ENCODE measurements at regions of chr10 and their contacts with region 1.

Region 1: DNA sequence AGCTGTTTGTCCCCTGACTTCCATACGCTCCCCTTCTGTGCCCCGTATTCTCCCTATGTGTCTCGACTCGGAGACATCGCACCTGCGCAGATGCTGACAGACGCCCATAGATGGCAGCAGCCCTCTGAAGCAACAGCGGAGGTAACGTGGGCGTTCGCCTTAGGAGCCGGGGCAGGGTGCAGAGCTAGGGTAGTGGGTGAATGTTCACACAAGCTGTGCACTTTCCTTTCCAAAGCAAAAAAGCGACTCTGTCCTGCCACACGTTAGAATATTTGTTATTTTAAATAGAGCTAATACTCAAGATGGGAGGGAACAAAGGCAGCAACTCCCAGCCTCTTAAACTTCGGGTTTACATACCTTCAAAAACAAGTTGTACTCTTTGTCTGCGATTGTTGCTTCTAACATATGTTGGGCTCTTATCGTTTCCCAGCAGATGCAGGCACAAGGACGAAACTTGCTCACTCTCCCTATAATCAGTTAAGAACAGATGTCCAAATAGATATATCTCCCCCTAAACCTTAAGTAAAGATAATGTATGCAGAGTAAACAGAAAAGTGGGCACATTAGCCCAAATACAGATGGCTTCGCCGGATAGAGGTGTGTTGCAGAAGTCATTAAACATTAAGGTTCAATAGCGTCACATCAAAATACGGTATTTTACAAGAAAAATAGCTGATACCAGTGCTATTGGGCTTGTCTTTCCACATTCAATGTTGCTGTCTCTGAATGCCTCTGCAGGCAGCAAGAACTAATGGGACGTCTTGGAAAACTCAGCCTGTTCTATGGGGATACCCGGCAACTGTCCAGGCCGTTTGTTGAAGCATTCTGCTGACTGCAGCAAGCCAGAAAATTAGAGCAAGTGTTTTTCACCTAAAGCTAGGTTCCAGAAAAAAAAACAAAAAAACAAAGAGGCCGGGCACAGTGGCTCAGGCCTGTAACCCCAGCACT is 340.3 kb upstream of the PRKCQ start:
- DNase-seq: peak; percentile 91
- ATAC-seq: peak; percentile 99
- H3K4me3 Mint-ChIP-seq: no peak overlapping the region
- H3K27ac Mint-ChIP-seq: peak overlapping the region; percentile 13
- H3K4me1 Mint-ChIP-seq: peaks cover 42% of the 10 kb centered on the region
- H3K27me3 Mint-ChIP-seq: no peaks in the 10 kb centered on the region

Region 2: GRCh38 chr10:6973899-6974298 is 53.6 kb after region 1 on chr10:
- CTCF ChIA-PET with region 1: interaction called, 11 read pairs
- DNase-seq: peak; percentile 85
- ATAC-seq: peak; percentile 99
- H3K4me3 Mint-ChIP-seq: peak overlapping the region; percentile 15
- H3K27ac Mint-ChIP-seq: peak overlapping the region; percentile 90
- H3K4me1 Mint-ChIP-seq: peaks cover 30% of the 10 kb centered on the region
- H3K27me3 Mint-ChIP-seq: peaks cover 9% of the 10 kb centered on the region

Region 3: GRCh38 chr10:7008638-7009037 is 88.3 kb after region 1 on chr10:
- CTCF ChIA-PET with region 1: no interaction called
- DNase-seq: no peak
- ATAC-seq: no peak
- H3K4me3 Mint-ChIP-seq: no peak overlapping the region
- H3K27ac Mint-ChIP-seq: no peak overlapping the region
- H3K4me1 Mint-ChIP-seq: peaks cover 11% of the 10 kb centered on the region
- H3K27me3 Mint-ChIP-seq: peaks cover 18% of the 10 kb centered on the region

Region 4: DNA sequence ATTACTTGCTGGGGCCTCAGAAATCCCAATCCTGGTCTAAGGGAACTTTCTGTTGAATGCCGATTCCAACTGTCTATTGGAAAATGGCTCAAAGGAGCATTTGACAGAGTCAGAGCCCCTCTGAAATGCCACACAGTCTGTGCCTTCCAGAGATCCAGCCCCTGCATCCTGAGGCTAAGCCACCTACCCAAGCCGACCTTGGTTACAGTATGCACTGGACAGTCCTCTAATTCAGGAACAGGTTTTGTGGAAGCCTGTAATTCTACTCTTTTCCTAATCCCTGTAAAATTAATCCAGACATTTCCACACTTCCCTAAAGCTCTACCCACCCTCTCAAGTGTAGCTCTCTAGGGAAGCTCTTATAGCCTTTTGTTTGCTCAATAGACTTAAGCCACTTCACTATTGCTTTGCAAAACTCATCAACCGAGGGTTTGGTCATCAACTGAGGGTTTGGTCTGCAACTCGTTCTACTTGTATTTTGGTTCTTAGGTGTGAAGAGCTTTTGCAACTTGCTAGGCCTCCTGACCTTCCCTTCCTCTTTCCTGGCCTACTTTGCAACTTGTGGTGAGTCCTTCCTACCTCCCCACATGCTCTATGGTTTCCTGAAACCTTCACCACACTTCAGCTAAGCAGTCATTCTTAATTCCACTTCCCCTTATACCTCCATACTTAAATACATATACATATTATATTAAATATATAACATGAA is 125.7 kb after region 1 on chr10:
- CTCF ChIA-PET with region 1: interaction called, 13 read pairs
- DNase-seq: peak; percentile 77
- ATAC-seq: peak; percentile 77
- H3K4me3 Mint-ChIP-seq: no peak overlapping the region
- H3K27ac Mint-ChIP-seq: peak overlapping the region; percentile 89
- H3K4me1 Mint-ChIP-seq: peaks cover 55% of the 10 kb centered on the region
- H3K27me3 Mint-ChIP-seq: no peaks in the 10 kb centered on the region

Region 5: DNA sequence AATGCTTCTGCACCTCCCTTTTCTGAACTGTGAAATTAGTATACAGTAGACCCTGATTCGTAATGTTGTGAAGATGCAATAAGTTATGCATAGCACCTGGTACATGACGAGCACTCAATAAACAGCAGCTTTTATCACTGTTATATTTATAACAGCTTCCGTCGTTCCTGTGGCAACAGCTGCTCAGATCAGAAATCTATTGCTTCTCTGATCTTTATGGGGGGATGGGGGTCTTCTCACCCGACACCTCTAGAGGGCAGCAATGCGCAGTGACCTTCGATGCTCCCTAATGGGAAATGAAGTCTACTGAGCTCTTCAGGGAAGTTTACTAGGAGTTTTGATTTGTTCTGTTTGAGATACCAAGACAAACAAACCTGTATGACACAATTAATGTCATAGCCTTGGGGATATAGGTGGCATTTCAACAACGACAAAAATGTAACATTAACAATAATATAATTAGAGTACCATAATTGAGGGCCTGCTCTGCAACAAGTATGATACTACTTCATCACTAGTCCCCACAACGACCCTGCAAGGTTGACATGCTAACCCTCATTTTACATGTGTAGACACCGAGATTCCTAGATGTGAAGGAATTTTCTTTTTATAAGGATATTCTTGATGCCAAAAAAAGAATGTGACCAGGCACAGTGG is 200.9 kb after region 1 on chr10:
- CTCF ChIA-PET with region 1: interaction called, 17 read pairs
- DNase-seq: peak; percentile 80
- ATAC-seq: peak; percentile 86
- H3K4me3 Mint-ChIP-seq: no peak overlapping the region
- H3K27ac Mint-ChIP-seq: peak overlapping the region; percentile 2
- H3K4me1 Mint-ChIP-seq: peaks cover 15% of the 10 kb centered on the region
- H3K27me3 Mint-ChIP-seq: peaks cover 48% of the 10 kb centered on the region

Region 6: DNA sequence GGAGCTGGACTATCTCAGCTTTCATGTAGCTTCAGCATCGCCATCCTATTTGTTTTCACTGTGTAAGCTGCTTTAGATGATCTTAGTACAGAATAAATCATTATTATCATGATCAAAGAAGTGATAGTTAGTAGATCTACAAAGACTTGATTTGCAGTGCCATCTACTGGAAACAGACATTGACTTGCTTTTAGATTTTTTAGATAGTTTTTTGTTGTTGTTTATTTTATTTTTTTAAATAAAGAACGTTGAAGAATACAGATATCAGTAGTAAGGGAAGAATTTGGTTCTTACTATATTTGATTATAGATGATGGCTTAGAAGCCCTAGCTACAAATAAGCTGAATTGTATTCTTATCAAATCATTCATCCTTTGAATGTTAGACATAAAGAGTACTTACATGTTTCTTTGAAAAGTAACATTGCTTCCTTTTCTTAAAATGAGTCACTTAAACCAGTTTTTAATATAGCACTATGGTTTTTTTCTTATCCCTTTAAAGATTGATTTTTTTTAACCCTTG is 496.8 kb after region 1 on chr10:
- CTCF ChIA-PET with region 1: interaction called, 82 read pairs
- DNase-seq: no peak
- ATAC-seq: peak; percentile 63
- H3K4me3 Mint-ChIP-seq: no peak overlapping the region
- H3K27ac Mint-ChIP-seq: peak overlapping the region; percentile 71
- H3K4me1 Mint-ChIP-seq: peaks cover 50% of the 10 kb centered on the region
- H3K27me3 Mint-ChIP-seq: peaks cover 27% of the 10 kb centered on the region